Activated T-helper 2 cell treated with anti-CD3 and anti-CD28 coated beads, Interferon-gamma antibody, Interleukin-2, Interleukin-4, amounts not matched to agents 10 μg/mL and 5 μg/mL and 100 μg/mL, durations not matched to agents 14 hours and 24 hours and 36 hours (primary cell): ENCODE measurements at regions of chr6 and their contacts with region 1.

Region 1: GRCh38 chr6:28940858-28941680 is 17.3 kb upstream of the TRIM27 start:
- DNase-seq: peak; percentile 77
- H3K4me3 Mint-ChIP-seq: peak overlapping the region; percentile 86
- H3K27ac Mint-ChIP-seq: peak overlapping the region; percentile 99
- H3K4me1 Mint-ChIP-seq: peaks cover 37% of the 10 kb centered on the region
- H3K27me3 Mint-ChIP-seq: peaks cover 5% of the 10 kb centered on the region

Region 2: DNA sequence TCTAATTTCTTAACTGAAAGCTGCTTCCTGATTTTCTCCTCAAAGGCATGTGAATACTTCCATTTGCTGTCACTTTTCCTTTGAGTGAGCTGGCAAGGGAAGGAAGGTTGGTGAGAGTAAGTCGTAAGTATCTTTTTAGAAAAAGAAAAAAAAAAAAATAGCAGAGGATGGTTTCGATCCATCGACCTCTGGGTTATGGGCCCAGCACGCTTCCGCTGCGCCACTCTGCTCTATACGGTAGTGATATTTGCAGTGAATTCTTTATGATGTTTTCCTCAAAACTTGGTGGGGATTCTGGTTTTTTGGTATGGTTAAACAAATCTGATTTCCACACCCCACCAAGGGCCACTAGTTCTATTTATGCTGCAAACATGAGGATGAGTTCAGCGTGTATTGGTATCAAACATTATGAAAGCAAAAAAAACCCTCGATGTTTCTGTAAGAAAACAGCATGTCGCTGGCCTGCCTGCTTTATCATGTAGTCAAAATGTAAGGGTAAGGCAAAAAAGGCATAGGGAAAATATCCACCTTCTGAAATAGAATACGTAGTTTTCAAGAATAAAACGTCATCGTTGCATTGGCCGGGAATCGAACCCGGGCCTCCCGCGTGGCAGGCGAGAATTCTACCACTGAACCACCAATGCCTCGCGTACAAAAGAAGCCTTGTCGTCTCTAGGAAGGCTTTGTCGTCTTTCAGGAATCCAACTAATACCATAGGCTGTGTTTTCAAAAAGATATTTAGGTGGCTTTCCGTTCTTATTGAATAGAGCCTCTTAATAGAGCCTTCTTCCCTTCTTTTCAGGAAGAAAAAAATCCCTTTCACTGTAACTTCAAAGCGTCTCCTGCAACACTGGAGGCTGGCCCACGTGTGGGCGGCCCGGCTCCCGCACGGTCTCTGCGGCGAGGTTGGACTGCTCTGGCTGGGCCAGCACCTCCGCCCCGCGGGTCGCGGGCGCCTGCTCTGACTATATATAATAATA is 1038.4 kb before region 1 on chr6:
- intact Hi-C with region 1: loop called (anchors 1 kb)
- DNase-seq: peak; percentile 78
- H3K4me3 Mint-ChIP-seq: peak overlapping the region; percentile 82
- H3K27ac Mint-ChIP-seq: peak overlapping the region; percentile 90
- H3K4me1 Mint-ChIP-seq: peaks cover 22% of the 10 kb centered on the region
- H3K27me3 Mint-ChIP-seq: peaks cover 13% of the 10 kb centered on the region

Region 3: DNA sequence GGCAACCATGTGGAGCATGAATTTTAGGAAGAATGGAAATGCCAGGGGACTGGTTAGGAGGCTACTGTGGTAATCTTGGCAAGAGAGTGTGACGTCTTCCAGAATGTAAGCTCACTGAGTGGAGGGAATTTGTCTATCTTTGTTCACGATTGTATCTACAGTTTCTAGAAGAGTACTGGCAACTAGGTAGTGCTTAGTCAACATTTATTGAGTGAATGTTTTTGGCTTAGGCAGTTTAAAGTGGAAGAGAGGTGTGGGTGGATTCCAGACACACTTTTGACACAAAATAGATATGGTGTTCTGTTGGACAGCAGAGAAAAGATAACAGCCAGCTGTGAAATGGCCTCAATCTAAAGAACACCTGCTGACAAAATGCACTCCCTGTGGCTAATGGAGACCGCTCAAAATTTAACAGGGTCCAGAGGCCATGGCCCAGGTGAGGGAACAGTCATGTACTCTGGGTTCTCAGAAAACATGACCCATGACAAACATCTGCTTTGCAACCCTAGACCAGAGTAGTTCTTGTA is 276.1 kb before region 1 on chr6:
- intact Hi-C with region 1: no loop called
- DNase-seq: no peak
- H3K4me3 Mint-ChIP-seq: no peak overlapping the region
- H3K27ac Mint-ChIP-seq: no peak overlapping the region
- H3K4me1 Mint-ChIP-seq: no peaks in the 10 kb centered on the region
- H3K27me3 Mint-ChIP-seq: peaks cover 20% of the 10 kb centered on the region

Region 4: GRCh38 chr6:28838634-28839442 is 102.2 kb before region 1 on chr6:
- intact Hi-C with region 1: loop called (anchors 1 kb)
- DNase-seq: peak; percentile 75
- H3K4me3 Mint-ChIP-seq: peak overlapping the region; percentile 97
- H3K27ac Mint-ChIP-seq: peak overlapping the region; percentile 79
- H3K4me1 Mint-ChIP-seq: peaks cover 17% of the 10 kb centered on the region
- H3K27me3 Mint-ChIP-seq: peaks cover 43% of the 10 kb centered on the region

Region 5: GRCh38 chr6:28895134-28895812 is 45.8 kb before region 1 on chr6:
- intact Hi-C with region 1: loop called (anchors 1 kb)
- DNase-seq: peak; percentile 90
- H3K4me3 Mint-ChIP-seq: peak overlapping the region; percentile 97
- H3K27ac Mint-ChIP-seq: peak overlapping the region; percentile 100
- H3K4me1 Mint-ChIP-seq: peaks cover 10% of the 10 kb centered on the region
- H3K27me3 Mint-ChIP-seq: peaks cover 3% of the 10 kb centered on the region

Region 6: DNA sequence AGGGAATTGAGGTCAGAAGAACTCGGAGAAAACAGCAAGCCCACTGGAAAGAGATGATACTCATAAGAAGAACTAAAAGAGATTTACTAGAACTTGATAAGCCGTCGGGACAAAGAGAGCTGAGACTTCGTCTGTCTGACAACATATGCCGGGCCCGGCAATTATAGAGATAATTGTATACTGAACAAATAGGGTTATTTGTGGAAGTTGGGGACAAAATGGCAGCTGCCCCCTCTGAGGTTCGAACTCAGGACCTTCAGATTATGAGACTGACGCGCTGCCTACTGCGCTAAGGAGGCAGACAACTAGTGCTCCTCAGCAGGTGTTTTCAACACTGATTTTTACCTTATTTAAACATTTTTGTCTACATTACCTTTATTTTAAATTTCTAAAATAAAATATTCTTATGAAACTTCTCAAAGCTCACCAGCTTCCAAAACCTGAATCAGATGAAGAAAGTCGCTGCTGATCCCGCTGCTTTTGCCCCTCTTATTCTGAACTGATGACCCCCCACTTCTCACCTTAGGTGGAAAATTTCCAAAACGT is 12.0 kb after region 1 on chr6:
- intact Hi-C with region 1: loop called (anchors 1 kb)
- DNase-seq: peak; percentile 33
- H3K4me3 Mint-ChIP-seq: peak overlapping the region; percentile 79
- H3K27ac Mint-ChIP-seq: no peak overlapping the region
- H3K4me1 Mint-ChIP-seq: peaks cover 30% of the 10 kb centered on the region
- H3K27me3 Mint-ChIP-seq: peaks cover 16% of the 10 kb centered on the region

Region 7: GRCh38 chr6:29016559-29017427 is 75.7 kb after region 1 on chr6:
- intact Hi-C with region 1: loop called (anchors 1 kb)
- DNase-seq: peak; percentile 75
- H3K4me3 Mint-ChIP-seq: peak overlapping the region; percentile 81
- H3K27ac Mint-ChIP-seq: peak overlapping the region; percentile 70
- H3K4me1 Mint-ChIP-seq: peaks cover 15% of the 10 kb centered on the region
- H3K27me3 Mint-ChIP-seq: peaks cover 28% of the 10 kb centered on the region

Region 8: DNA sequence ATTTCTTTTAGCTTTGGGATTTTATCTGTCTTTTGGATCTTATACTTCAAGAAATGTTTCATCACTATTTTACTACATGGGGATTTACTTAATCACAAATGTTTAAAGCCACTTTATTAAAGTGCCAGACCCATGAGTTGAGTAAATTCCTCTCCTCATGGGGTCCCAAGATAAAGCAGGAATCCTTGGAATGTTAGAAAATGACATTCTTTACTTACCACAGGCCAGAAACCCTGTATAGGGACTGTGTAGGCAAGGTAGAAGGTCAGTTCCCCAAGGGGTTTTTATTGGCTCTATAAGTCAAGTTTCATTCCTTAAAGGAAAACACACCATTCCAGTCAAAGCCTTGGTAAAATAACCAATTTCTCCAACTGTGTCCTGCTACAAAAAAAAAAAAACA is 201.3 kb after region 1 on chr6:
- intact Hi-C with region 1: no loop called
- DNase-seq: no peak
- H3K4me3 Mint-ChIP-seq: no peak overlapping the region
- H3K27ac Mint-ChIP-seq: no peak overlapping the region
- H3K4me1 Mint-ChIP-seq: no peaks in the 10 kb centered on the region
- H3K27me3 Mint-ChIP-seq: no peaks in the 10 kb centered on the region